Activated T-helper 2 cell treated with anti-CD3 and anti-CD28 coated beads, Interferon-gamma antibody, Interleukin-2, Interleukin-4, amounts not matched to agents 10 μg/mL and 5 μg/mL and 100 μg/mL, durations not matched to agents 14 hours and 24 hours and 36 hours (primary cell): ENCODE measurements at regions of chr2 and their contacts with region 1.

Region 1: GRCh38 chr2:11583840-11584524 is 50.1 kb downstream of the GREB1 start:
- DNase-seq: peak; percentile 55
- H3K4me3 Mint-ChIP-seq: no peak overlapping the region
- H3K27ac Mint-ChIP-seq: peak overlapping the region; percentile 47
- H3K4me1 Mint-ChIP-seq: peaks cover 13% of the 10 kb centered on the region
- H3K27me3 Mint-ChIP-seq: no peaks in the 10 kb centered on the region

Region 2: GRCh38 chr2:10832203-10832936 is 751.6 kb before region 1 on chr2:
- intact Hi-C with region 1: loop called (anchors 1 kb)
- DNase-seq: peak; percentile 73
- H3K4me3 Mint-ChIP-seq: no peak overlapping the region
- H3K27ac Mint-ChIP-seq: no peak overlapping the region
- H3K4me1 Mint-ChIP-seq: peaks cover 2% of the 10 kb centered on the region
- H3K27me3 Mint-ChIP-seq: peaks cover 28% of the 10 kb centered on the region

Region 3: DNA sequence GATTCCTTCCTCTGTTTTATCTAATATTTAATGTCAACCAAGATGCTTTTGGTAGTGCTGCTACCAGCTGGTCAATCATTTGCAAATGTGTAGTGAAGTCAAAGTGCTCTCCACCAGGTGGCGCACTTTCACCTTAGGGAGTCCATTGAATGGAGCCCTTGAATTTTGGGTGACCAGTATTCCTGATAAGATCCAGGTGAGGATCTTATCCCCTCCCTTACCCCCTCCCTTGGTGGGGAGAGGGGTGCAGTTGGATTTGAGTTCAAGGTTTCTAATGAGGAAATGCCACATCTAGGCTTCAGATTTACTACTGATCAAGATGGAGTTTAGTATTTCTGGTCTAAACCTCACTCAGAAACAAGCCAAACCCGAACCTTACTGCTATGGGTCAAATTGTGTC is 106.0 kb before region 1 on chr2:
- intact Hi-C with region 1: loop called (anchors 1 kb)
- DNase-seq: peak; percentile 65
- H3K4me3 Mint-ChIP-seq: no peak overlapping the region
- H3K27ac Mint-ChIP-seq: no peak overlapping the region
- H3K4me1 Mint-ChIP-seq: peaks cover under 1% of the 10 kb centered on the region
- H3K27me3 Mint-ChIP-seq: peaks cover 29% of the 10 kb centered on the region

Region 4: DNA sequence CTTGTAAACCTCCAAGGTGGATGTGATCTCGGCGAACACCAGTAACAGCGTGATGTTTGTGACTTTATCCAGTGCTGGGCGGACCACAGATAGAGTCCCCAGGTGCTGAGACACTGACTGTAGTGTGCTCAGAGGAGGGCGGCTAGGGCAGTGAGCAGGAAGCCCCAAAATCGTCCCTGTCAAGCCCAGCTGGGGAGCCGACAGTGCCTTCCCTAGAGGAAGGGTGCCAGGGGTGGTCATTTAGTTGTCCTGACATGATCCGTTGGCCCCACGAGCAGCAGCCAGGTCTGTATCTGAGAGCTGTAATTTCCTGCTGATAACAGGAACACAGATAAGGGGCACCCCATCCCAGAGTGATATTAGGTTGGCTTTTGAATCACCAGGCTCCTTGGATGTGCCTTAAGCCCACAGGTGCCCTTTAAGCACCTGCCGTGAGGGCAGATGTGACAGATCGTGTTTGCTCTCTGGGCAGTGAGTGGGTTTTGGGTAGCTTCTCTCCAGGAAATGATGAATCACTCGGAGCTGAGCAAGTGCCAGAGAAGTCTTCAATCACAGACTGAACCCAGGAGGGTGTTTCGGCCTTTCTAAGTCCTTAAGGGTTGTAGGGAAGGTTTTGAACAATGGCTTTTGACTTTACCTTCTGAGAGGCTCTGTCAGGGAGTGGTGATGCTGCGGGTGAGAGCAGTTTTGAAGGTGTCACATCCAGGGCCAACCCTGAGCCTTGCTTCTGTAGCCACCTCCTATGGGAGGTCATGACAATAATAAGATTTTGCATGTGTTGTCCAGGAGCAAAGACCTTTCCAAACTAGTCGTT is 170.1 kb after region 1 on chr2:
- intact Hi-C with region 1: loop called (anchors 10 kb)
- DNase-seq: peak; percentile 52
- H3K4me3 Mint-ChIP-seq: peak overlapping the region; percentile 74
- H3K27ac Mint-ChIP-seq: peak overlapping the region; percentile 93
- H3K4me1 Mint-ChIP-seq: peaks cover 75% of the 10 kb centered on the region
- H3K27me3 Mint-ChIP-seq: no peaks in the 10 kb centered on the region